AG04449 (cell line): ENCODE measurements at regions of chr15 and their contacts with region 1.

Region 1: DNA sequence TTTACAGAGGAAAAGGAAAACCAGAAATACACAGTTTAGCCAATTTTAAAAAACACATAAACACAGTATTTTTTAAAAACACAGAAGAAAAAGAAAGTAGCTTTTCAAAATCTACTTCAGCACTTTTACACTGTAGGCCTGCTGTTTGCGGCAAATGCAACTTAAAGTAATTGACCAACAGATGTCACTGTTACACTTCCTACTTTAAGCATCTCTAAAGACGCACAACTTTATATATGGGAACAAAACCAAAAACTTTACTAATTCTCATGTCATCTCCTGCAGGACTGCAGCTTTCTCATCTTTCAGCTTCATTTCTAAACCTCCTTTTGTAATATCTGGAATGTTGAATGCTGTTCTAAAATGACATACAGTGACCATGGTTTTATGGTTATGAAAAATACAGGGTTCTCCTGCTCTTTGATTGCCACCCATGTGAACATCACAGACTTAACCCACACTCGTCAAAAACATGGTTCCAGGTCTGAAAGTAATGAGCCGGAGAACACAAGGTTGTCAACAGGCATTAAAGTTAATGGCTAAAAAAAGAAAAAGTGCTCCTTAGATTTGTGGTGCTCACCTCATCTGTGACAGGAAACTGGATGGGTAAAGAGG is 107.9 kb downstream of the FMN1 start:
- DNase-seq: no peak
- H3K4me3 ChIP-seq: no peak overlapping the region
- CTCF ChIP-seq: peak; percentile 51

Region 2: DNA sequence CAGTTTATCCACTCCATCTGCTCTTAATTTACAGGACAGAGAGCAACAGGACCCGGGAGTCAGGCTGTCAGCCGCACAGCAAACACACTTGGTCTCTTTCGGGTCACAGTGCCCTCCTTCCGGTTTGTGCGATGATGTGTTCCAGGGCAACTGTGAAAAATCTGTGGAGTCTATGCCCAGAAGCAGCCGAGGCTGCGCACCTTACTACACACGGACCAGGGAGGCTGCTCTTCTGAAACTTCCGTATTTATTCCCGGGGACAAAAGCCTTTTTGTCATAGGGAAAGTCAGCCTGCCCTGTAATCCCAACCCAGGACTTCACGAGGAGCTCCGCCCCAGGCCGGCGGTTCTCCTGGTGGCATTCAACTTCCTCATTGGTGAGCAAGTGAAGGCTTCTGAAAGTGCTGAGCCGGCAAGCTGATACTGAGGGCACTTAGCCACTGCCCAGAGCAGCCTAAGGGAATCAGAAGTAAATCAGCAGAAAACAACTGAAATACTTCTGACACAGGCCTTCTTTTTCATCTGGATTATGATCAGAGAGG is 18.6 kb before region 1 on chr15:
- CTCF ChIA-PET with region 1: interaction called, 26 read pairs
- POLR2A ChIA-PET with region 1: no interaction called
- DNase-seq: no peak
- H3K4me3 ChIP-seq: peak overlapping the region; percentile 59
- CTCF ChIP-seq: no peak

Region 3: GRCh38 chr15:33098094-33099040 is 11.8 kb after region 1 on chr15:
- CTCF ChIA-PET with region 1: interaction called, 24 read pairs
- POLR2A ChIA-PET with region 1: no interaction called
- DNase-seq: peak; percentile 59
- H3K4me3 ChIP-seq: no peak overlapping the region
- CTCF ChIP-seq: no peak

Region 4: DNA sequence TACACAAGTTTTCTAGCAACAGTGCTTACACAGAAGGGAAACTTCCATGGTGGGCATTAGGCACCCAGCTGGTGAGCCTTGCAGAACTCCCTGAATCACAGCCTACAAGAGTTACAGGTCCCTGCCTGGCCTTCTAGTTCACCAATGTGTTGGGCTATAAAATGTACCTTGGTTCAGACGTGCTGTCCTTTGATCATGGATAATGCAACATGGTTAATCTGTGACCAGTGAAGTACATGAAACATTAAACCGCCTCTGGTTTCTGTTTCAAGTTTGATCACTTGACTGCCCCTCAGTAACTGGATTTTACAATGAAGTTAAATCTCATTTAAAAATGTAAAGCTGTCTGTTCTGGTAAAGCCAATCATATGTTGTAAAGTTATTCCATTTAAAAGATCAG is 56.1 kb after region 1 on chr15:
- CTCF ChIA-PET with region 1: interaction called, 813 read pairs
- POLR2A ChIA-PET with region 1: no interaction called
- DNase-seq: no peak
- H3K4me3 ChIP-seq: no peak overlapping the region
- CTCF ChIP-seq: no peak

Region 5: DNA sequence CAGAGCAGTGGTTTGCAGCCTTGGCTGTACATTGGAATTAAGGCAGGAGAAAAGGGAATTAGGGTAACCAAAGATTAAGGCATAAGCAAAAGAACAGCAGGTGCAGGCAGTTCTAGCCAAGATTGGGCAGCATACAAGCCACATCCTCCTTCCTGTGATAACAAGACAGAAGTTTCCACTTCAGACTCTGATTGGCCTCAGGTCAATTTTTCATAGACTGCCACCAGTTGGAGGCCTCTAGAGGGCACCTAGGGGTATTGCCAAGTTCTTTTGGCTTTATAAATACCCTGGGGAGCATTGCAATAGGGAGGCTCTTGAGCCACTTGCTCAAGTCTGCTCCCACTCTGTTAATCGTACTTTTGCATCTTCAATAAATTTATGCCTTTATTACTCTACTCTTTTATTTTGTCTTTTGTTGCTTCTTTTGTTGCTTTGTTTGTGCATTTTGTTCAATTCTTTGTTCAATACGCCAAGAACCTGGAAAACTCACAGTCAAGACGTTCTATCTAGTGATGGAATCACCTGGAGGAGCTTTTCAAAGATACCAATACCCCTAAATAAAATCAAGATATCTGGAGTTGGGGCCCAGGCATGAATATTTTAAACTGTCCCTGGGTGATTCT is 140.1 kb after region 1 on chr15:
- CTCF ChIA-PET with region 1: interaction called, 12 read pairs
- POLR2A ChIA-PET with region 1: no interaction called
- DNase-seq: no peak
- H3K4me3 ChIP-seq: no peak overlapping the region
- CTCF ChIP-seq: no peak